ENCODE measurements at regions of chr11 and their contacts with region 1.

Region 1: GRCh38 chr11:63478896-63479295 is 12.1 kb downstream of the PLAAT5 start:
- DNase-seq: no peak
- H3K4me3 ChIP-seq: no peak overlapping the region
- H3K27ac ChIP-seq: no peak overlapping the region
- H3K4me1 ChIP-seq: no peaks in the 10 kb centered on the region
- H3K27me3 ChIP-seq: no peaks in the 10 kb centered on the region
- CTCF ChIP-seq: peak; percentile 85 to 91 (median 87)
- POLR2A ChIP-seq: no peak

Region 2: DNA sequence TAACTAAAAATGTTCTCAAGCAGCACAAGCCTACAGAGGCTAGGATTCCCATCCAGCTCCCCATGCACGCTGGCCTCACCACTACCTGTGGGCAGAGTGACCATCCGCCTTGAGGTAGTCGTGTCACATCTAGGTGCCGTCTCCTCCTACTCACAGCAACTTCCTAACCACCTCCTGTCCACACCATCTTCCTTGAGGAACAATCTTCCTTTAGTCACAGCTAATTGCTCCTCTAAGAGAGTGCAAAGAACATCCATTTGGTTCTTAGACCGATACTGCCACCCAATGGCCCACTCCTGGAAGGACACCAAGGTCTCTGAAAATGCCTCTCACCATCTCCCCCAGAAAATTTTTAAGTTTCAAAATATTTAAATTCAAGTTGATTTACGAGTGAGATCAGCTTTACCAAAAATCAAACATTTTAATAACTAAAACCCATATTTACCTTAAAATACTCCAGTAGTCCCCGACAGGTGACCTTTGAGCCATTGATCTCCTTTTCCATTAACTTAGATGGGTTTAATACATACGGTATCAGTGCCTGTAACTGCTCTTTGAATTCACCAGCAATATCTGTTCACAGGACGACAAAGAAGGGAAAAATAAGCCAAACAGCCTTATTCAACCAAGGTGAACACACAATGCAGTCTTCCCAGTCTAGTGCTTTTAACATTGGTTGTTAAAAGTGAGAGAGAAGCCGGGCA is 157.0 kb after region 1 on chr11:
- intact Hi-C with region 1: loop called (anchors 5 kb)
- DNase-seq: no peak
- H3K4me3 ChIP-seq: no peak overlapping the region
- H3K27ac ChIP-seq: no peak overlapping the region
- H3K4me1 ChIP-seq: peaks cover 9% of the 10 kb centered on the region
- H3K27me3 ChIP-seq: no peaks in the 10 kb centered on the region
- CTCF ChIP-seq: peak; percentile 40 to 63 (median 62)
- POLR2A ChIP-seq: no peak

Region 3: DNA sequence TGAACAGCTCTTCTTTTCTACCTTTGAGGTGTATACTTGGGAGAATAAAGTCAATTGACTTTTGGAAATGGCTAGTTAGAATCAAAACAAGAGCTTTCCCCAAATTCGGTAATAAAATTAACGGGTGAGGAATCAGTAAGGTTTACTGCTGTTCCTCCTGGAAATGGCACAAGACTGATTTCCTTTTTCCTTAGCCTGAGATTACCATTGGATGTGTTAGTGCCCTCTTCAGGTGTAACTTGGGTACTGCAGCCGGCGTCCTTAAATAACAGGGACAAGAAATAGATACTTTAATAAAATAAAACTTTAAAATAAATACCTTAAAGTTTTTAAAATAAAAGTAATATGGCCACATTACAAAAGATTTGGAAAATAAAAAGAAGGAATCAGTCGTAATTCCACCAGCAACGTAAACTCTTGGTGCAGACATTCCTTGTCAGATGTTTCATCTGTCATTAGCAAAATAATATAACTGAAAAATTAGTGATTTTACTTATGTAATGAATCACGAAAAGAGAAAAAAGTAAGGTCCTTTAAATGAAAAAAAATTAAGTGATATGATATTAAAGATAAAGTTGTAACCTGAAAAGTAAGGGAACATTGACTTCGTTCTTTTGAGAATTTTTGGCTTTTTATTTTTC is 259.9 kb after region 1 on chr11:
- intact Hi-C with region 1: loop called (anchors 10 kb)
- DNase-seq: no peak
- H3K4me3 ChIP-seq: no peak overlapping the region
- H3K27ac ChIP-seq: no peak overlapping the region
- H3K4me1 ChIP-seq: no peaks in the 10 kb centered on the region
- H3K27me3 ChIP-seq: no peaks in the 10 kb centered on the region
- CTCF ChIP-seq: peak; percentile 64 to 92 (median 91)
- POLR2A ChIP-seq: no peak

Region 4: GRCh38 chr11:64629796-64630562 is 1151.1 kb after region 1 on chr11:
- intact Hi-C with region 1: loop called (anchors 5 kb)
- DNase-seq: no peak
- H3K4me3 ChIP-seq: no peak overlapping the region
- H3K27ac ChIP-seq: no peak overlapping the region
- H3K4me1 ChIP-seq: no peaks in the 10 kb centered on the region
- H3K27me3 ChIP-seq: no peaks in the 10 kb centered on the region
- CTCF ChIP-seq: no peak
- POLR2A ChIP-seq: no peak